OCI-LY7 (cell line): ENCODE measurements at regions of chr6 and their contacts with region 1.

Region 1: GRCh38 chr6:141562851-141563763 is 569.6 kb upstream of the GJE1 start:
- DNase-seq: peak; percentile 84
- H3K4me3 ChIP-seq: peak overlapping the region; percentile 33
- H3K27ac ChIP-seq: peak overlapping the region; percentile 43
- H3K4me1 ChIP-seq: peaks cover 16% of the 10 kb centered on the region
- CTCF ChIP-seq: peak; percentile 95

Region 2: DNA sequence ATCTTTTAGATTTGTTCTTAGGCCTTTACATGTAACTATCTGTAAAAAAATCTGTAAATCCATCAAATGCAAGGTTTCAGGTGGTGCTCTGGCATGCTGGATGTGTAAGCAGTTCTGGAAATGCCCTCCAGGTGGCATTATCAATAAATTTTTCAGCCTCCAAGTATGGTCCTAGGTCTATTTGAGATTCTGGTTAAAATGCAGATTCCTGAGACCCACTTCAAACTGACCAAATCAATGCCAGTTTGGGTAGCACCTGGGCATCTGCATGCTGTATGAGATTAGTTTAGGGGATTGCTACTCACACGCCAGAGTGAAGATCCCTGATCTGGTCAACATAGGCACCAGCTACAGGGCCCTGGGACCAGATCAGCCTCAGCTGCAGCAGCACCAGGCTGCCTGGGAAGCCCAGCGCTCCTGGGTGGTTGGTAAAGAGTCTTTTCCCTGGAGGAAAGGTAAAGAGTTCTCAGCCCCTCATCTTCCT is 1681.3 kb before region 1 on chr6:
- CTCF ChIA-PET with region 1: no interaction called
- POLR2A ChIA-PET with region 1: no interaction called
- intact Hi-C with region 1: loop called (anchors 5 kb)
- DNase-seq: peak; percentile 23
- H3K4me3 ChIP-seq: no peak overlapping the region
- H3K27ac ChIP-seq: no peak overlapping the region
- H3K4me1 ChIP-seq: no peaks in the 10 kb centered on the region
- CTCF ChIP-seq: peak; percentile 78

Region 3: GRCh38 chr6:141290941-141291721 is 272.0 kb before region 1 on chr6:
- CTCF ChIA-PET with region 1: no interaction called
- POLR2A ChIA-PET with region 1: no interaction called
- intact Hi-C with region 1: loop called (anchors 5 kb)
- DNase-seq: no peak
- H3K4me3 ChIP-seq: no peak overlapping the region
- H3K27ac ChIP-seq: no peak overlapping the region
- H3K4me1 ChIP-seq: no peaks in the 10 kb centered on the region
- CTCF ChIP-seq: no peak

Region 4: GRCh38 chr6:141359953-141360352 is 203.2 kb before region 1 on chr6:
- CTCF ChIA-PET with region 1: no interaction called
- POLR2A ChIA-PET with region 1: no interaction called
- intact Hi-C with region 1: no loop called
- DNase-seq: no peak
- H3K4me3 ChIP-seq: no peak overlapping the region
- H3K27ac ChIP-seq: no peak overlapping the region
- H3K4me1 ChIP-seq: no peaks in the 10 kb centered on the region
- CTCF ChIP-seq: no peak

Region 5: GRCh38 chr6:141598487-141598886 is 35.4 kb after region 1 on chr6:
- CTCF ChIA-PET with region 1: no interaction called
- POLR2A ChIA-PET with region 1: no interaction called
- intact Hi-C with region 1: no loop called
- DNase-seq: no peak
- H3K4me3 ChIP-seq: no peak overlapping the region
- H3K27ac ChIP-seq: no peak overlapping the region
- H3K4me1 ChIP-seq: no peaks in the 10 kb centered on the region
- CTCF ChIP-seq: no peak